CD4-positive, alpha-beta memory T cell (primary cell): ENCODE measurements at regions of chr12 and their contacts with region 1.

Region 1: GRCh38 chr12:53180220-53180930 is at the starts of genes CSAD and ZNF740:
- DNase-seq: peak; percentile 96 to 99 (median 97)
- H3K4me3 ChIP-seq: peak within 1 kb of the TSS; percentile 56 to 74
- H3K4me3 Mint-ChIP-seq: peak within 1 kb of the TSS; percentile 90 to 96 (median 91)
- H3K27ac ChIP-seq: peak within 1 kb of the TSS; percentile 89
- H3K27ac Mint-ChIP-seq: peak within 1 kb of the TSS; percentile 88 to 98 (median 97)
- H3K4me1 ChIP-seq: peaks cover 50% of the 10 kb centered on the region
- H3K4me1 Mint-ChIP-seq: peaks cover 36 to 62% (median 49%) of the 10 kb centered on the region in 4 donors
- H3K27me3 ChIP-seq: no peaks in the 10 kb centered on the region
- H3K27me3 Mint-ChIP-seq: no peaks in the 10 kb centered on the region
- total RNA-seq, gene CSAD: 62.5 to 64.2 TPM
- total RNA-seq, gene ZNF740: 109 to 113 TPM

Region 2: GRCh38 chr12:53054112-53054833 is 126.1 kb before region 1 on chr12:
- CTCF ChIA-PET with region 1: no interaction called
- POLR2A ChIA-PET with region 1: no interaction called
- intact Hi-C with region 1: loop called (anchors 1 kb)
- DNase-seq: peak; percentile 94 to 96 (median 94)
- H3K4me3 ChIP-seq: peak overlapping the region; percentile 76 to 87
- H3K4me3 Mint-ChIP-seq: peak overlapping the region; percentile 88 to 95 (median 92)
- H3K27ac ChIP-seq: peak overlapping the region; percentile 62
- H3K27ac Mint-ChIP-seq: peak overlapping the region; percentile 80 to 98 (median 93)
- H3K4me1 ChIP-seq: peaks cover 9% of the 10 kb centered on the region
- H3K4me1 Mint-ChIP-seq: peaks cover 4 to 18% (median 12%) of the 10 kb centered on the region in 4 donors
- H3K27me3 ChIP-seq: no peaks in the 10 kb centered on the region
- H3K27me3 Mint-ChIP-seq: no peaks in the 10 kb centered on the region

Region 3: DNA sequence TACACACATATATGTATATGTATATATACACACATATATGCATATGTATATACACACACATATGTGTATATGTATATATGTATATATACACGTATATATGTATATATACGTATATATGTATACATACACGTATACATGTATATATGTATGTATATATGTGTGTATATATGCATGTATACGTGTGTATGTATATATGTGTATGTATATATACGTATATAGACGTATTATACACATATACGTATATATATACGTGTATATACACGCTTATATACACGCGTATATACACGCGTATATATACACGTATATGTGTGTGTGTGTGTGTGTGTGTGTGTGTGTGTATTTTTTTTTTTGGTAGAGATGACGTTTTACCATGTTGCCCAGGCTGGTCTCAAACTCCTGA is 32.7 kb before region 1 on chr12:
- CTCF ChIA-PET with region 1: no interaction called
- POLR2A ChIA-PET with region 1: no interaction called
- intact Hi-C with region 1: no loop called
- DNase-seq: no peak
- H3K4me3 ChIP-seq: no peak overlapping the region
- H3K4me3 Mint-ChIP-seq: no peak overlapping the region
- H3K27ac ChIP-seq: no peak overlapping the region
- H3K27ac Mint-ChIP-seq: no peak overlapping the region
- H3K4me1 ChIP-seq: no peaks in the 10 kb centered on the region
- H3K4me1 Mint-ChIP-seq: peaks cover 0 to 1% (median 0%) of the 10 kb centered on the region in 4 donors
- H3K27me3 ChIP-seq: no peaks in the 10 kb centered on the region
- H3K27me3 Mint-ChIP-seq: no peaks in the 10 kb centered on the region

Region 4: DNA sequence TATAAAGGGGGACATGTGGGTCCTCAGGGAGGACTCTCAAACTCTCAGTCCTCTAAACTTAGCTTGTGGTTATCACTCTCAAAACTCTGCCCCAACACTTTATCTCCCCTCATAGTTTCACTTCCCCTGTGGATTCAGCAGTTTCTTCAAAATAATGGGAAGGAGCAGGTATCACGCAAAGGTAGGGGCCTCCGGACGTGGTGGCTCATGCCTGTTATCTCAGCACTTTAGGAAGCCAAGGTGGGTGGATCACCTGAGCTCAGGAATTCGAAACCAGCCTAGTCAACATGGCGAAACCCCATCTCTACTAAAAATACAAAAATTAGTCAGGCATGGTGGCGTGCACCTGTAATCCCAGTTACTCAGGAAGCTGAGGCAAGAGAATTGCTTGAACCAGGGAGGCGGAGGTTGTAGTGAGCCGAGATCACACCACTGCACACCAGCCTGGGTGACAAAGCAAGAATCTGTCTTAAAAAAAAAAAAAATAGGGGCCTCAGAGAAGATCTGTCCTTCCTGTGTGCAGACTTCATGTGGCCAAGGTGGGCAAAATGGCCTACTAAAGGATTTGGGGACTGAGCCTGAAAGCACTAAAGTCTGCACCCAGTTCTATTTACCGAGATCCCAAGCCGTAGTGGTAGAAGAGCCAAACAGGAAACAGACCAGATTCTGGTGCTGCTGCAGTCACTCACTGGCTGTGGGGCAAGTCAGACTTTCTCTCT is 20.2 kb after region 1 on chr12:
- CTCF ChIA-PET with region 1: interaction called, 16 read pairs
- POLR2A ChIA-PET with region 1: interaction called, 463 read pairs
- intact Hi-C with region 1: loop called (anchors 2 kb)
- DNase-seq: no peak
- H3K4me3 ChIP-seq: peak overlapping the region; percentile 12 to 29
- H3K4me3 Mint-ChIP-seq: peak overlapping the region; percentile 66 to 89 (median 73)
- H3K27ac ChIP-seq: peak overlapping the region; percentile 41
- H3K27ac Mint-ChIP-seq: peak overlapping the region; percentile 73 to 95 (median 86)
- H3K4me1 ChIP-seq: peaks cover 95% of the 10 kb centered on the region
- H3K4me1 Mint-ChIP-seq: peaks cover 48 to 84% (median 66%) of the 10 kb centered on the region in 4 donors
- H3K27me3 ChIP-seq: no peaks in the 10 kb centered on the region
- H3K27me3 Mint-ChIP-seq: no peaks in the 10 kb centered on the region

Region 5: GRCh38 chr12:53220801-53221202 is 40.4 kb after region 1 on chr12:
- CTCF ChIA-PET with region 1: interaction called, 3 read pairs
- POLR2A ChIA-PET with region 1: interaction called, 463 read pairs
- intact Hi-C with region 1: loop called (anchors 1 kb)
- DNase-seq: peak; percentile 60 to 85 (median 65)
- H3K4me3 ChIP-seq: peak overlapping the region; percentile 73 to 82
- H3K4me3 Mint-ChIP-seq: peak overlapping the region; percentile 95 to 99 (median 98)
- H3K27ac ChIP-seq: peak overlapping the region; percentile 98
- H3K27ac Mint-ChIP-seq: peak overlapping the region; percentile 93 to 99 (median 97)
- H3K4me1 ChIP-seq: peaks cover 78% of the 10 kb centered on the region
- H3K4me1 Mint-ChIP-seq: peaks cover 63 to 93% (median 72%) of the 10 kb centered on the region in 4 donors
- H3K27me3 ChIP-seq: no peaks in the 10 kb centered on the region
- H3K27me3 Mint-ChIP-seq: no peaks in the 10 kb centered on the region

Region 6: GRCh38 chr12:53267999-53268647 is 87.7 kb after region 1 on chr12 and contains the start of gene ESPL1:
- CTCF ChIA-PET with region 1: interaction called, 8 read pairs
- POLR2A ChIA-PET with region 1: interaction called, 9 read pairs
- intact Hi-C with region 1: loop called (anchors 1 kb)
- DNase-seq: peak; percentile 78 to 82 (median 81)
- H3K4me3 ChIP-seq: peak within 1 kb of the TSS; percentile 76 to 91
- H3K4me3 Mint-ChIP-seq: peak within 1 kb of the TSS; percentile 93 to 100 (median 96)
- H3K27ac ChIP-seq: peak within 1 kb of the TSS; percentile 71
- H3K27ac Mint-ChIP-seq: peak within 1 kb of the TSS; percentile 92 to 97 (median 95)
- H3K4me1 ChIP-seq: peaks cover 10% of the 10 kb centered on the region
- H3K4me1 Mint-ChIP-seq: peaks cover 11 to 29% (median 19%) of the 10 kb centered on the region in 4 donors
- H3K27me3 ChIP-seq: no peaks in the 10 kb centered on the region
- H3K27me3 Mint-ChIP-seq: no peaks in the 10 kb centered on the region
- total RNA-seq, gene ESPL1: 0.20 to 0.55 TPM

Region 7: GRCh38 chr12:53295070-53295890 is 114.9 kb after region 1 on chr12 and contains the start of gene PFDN5:
- CTCF ChIA-PET with region 1: interaction called, 8 read pairs
- POLR2A ChIA-PET with region 1: interaction called, 30 read pairs
- intact Hi-C with region 1: loop called (anchors 1 kb)
- DNase-seq: peak; percentile 87 to 93 (median 91)
- H3K4me3 ChIP-seq: peak within 1 kb of the TSS; percentile 63 to 94
- H3K4me3 Mint-ChIP-seq: peak within 1 kb of the TSS; percentile 98 to 100 (median 99)
- H3K27ac ChIP-seq: peak within 1 kb of the TSS; percentile 81
- H3K27ac Mint-ChIP-seq: peak within 1 kb of the TSS; percentile 97 to 100 (median 99)
- H3K4me1 ChIP-seq: peaks cover 49% of the 10 kb centered on the region
- H3K4me1 Mint-ChIP-seq: peaks cover 23 to 59% (median 44%) of the 10 kb centered on the region in 4 donors
- H3K27me3 ChIP-seq: no peaks in the 10 kb centered on the region
- H3K27me3 Mint-ChIP-seq: no peaks in the 10 kb centered on the region
- total RNA-seq, gene PFDN5: 717 to 718 TPM

Region 8: DNA sequence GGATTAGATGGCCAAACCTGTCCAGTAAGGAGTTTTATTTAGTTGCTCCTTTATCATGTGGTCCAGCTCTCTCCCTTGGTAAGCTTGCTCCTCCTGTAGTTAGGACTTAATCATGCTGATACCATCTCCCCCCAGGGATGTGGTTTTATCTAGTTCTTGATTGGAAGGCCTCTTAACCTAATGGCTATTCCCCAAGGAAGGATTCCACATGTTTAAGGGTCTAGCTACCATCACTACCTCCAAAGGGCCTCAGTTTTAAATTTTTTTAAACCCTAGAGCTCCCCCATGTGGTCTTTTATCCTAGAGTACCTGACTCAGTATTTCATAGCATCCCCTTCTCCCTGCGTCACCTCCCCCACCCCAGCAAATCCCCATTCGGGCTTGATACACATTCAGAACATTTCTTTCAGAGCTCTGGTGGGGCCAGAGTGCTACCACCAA is 296.4 kb after region 1 on chr12:
- CTCF ChIA-PET with region 1: no interaction called
- POLR2A ChIA-PET with region 1: no interaction called
- intact Hi-C with region 1: no loop called
- DNase-seq: peak in 1 of 5 donors; percentile 15
- H3K4me3 ChIP-seq: no peak overlapping the region
- H3K4me3 Mint-ChIP-seq: no peak overlapping the region
- H3K27ac ChIP-seq: no peak overlapping the region
- H3K27ac Mint-ChIP-seq: peak overlapping the region in 6 of 7 donors; percentile 2 to 82 (median 32)
- H3K4me1 ChIP-seq: peaks cover 50% of the 10 kb centered on the region
- H3K4me1 Mint-ChIP-seq: peaks cover 31 to 50% (median 33%) of the 10 kb centered on the region in 4 donors
- H3K27me3 ChIP-seq: no peaks in the 10 kb centered on the region
- H3K27me3 Mint-ChIP-seq: no peaks in the 10 kb centered on the region

Region 9: DNA sequence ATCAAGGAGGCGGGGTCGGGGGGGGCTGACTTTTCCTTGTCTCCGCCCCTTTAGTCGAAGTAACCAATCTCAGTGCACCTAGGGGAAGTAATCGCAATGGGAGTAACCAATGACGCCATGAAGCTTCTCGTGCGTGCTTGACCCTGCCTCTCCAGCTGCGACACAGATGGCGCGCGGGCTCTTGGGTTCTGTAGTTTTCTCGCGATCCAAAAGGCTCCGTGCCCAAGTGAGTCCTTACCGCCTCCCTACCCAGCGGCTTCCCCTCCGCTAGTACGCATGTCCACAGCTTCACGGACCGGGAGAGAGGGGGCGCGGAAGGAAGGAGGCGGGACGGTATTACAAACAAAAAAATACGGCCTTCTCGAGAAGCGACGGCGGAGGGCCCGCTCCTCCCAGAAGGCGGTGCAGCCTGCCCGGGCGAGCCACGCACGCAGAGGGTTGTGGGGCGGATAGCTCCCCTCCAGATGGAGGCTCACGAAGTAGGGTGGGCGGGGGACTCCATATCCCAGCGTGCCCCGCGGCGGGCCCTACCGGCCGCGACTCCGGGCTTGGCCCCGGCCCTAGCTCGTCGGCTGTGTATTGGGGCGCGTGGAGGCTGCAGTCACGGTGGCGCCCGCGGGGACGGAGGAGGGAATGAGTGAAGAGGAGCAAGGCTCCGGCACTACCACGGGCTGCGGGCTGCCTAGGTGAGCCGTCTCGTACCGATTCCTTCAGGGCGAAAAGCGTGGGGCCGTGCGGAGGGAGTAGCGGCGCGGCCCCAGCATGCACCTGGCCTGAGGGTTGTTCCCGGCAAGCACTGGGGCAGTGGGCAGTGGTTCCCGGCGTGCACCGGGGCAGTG is 320.6 kb after region 1 on chr12 and contains the start of gene TARBP2:
- CTCF ChIA-PET with region 1: no interaction called
- POLR2A ChIA-PET with region 1: interaction called, 25 read pairs
- intact Hi-C with region 1: loop called (anchors 2 kb)
- DNase-seq: peak; percentile 98 to 99 (median 99)
- H3K4me3 ChIP-seq: peak within 1 kb of the TSS; percentile 79 to 91
- H3K4me3 Mint-ChIP-seq: peak within 1 kb of the TSS; percentile 89 to 98 (median 92)
- H3K27ac ChIP-seq: peak within 1 kb of the TSS; percentile 98
- H3K27ac Mint-ChIP-seq: peak within 1 kb of the TSS; percentile 92 to 100 (median 99)
- H3K4me1 ChIP-seq: peaks cover 41% of the 10 kb centered on the region
- H3K4me1 Mint-ChIP-seq: peaks cover 17 to 63% (median 45%) of the 10 kb centered on the region in 4 donors
- H3K27me3 ChIP-seq: no peaks in the 10 kb centered on the region
- H3K27me3 Mint-ChIP-seq: no peaks in the 10 kb centered on the region
- total RNA-seq, gene TARBP2: 26.9 to 37.0 TPM

Region 10: DNA sequence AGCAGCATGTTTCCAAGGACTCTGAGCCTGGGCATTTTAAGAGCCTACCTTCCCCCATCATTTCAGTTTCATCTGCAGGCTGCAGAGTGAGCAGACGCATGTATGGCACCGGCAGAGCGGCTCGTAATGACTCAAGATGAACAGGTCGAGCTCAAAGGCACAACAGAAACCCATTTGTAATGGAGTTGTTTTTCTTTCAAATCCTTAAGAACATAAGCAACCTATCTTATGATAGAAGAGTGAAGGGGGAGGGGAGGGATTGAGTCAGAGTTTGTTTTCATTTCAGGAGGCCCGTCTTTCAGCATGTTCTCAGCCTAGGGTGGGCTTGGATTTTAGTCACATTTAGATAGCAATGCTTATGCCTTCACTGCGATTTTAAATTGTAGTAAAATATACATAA is 626.3 kb after region 1 on chr12:
- CTCF ChIA-PET with region 1: no interaction called
- POLR2A ChIA-PET with region 1: no interaction called
- intact Hi-C with region 1: no loop called
- DNase-seq: no peak
- H3K4me3 ChIP-seq: no peak overlapping the region
- H3K4me3 Mint-ChIP-seq: no peak overlapping the region
- H3K27ac ChIP-seq: no peak overlapping the region
- H3K27ac Mint-ChIP-seq: no peak overlapping the region
- H3K4me1 ChIP-seq: no peaks in the 10 kb centered on the region
- H3K4me1 Mint-ChIP-seq: no peaks in the 10 kb centered on the region
- H3K27me3 ChIP-seq: peaks cover 5% of the 10 kb centered on the region
- H3K27me3 Mint-ChIP-seq: peaks cover 23 to 28% of the 10 kb centered on the region in 2 donors

Region 11: DNA sequence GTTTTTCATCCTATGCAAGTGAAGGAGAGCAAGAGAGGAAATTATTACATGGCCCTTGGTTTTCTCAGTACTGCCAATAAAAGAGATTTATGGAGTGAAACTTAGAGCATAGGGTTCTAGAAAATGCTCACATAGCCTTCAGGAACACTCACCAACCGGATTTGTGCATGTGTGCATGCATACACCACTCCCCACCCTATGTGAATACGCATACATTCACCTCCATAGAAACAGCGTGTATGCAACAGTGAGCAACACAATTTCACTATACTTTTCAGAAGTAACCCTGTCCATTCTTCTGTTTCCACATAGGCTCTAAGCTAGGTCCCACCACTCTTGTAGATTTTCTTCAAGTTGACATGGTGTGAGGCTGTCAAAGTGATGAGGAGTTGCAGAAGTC is 726.7 kb after region 1 on chr12:
- CTCF ChIA-PET with region 1: no interaction called
- POLR2A ChIA-PET with region 1: no interaction called
- intact Hi-C with region 1: no loop called
- DNase-seq: no peak
- H3K4me3 ChIP-seq: no peak overlapping the region
- H3K4me3 Mint-ChIP-seq: no peak overlapping the region
- H3K27ac ChIP-seq: no peak overlapping the region
- H3K27ac Mint-ChIP-seq: no peak overlapping the region
- H3K4me1 ChIP-seq: no peaks in the 10 kb centered on the region
- H3K4me1 Mint-ChIP-seq: no peaks in the 10 kb centered on the region
- H3K27me3 ChIP-seq: no peaks in the 10 kb centered on the region
- H3K27me3 Mint-ChIP-seq: peaks cover 12 to 25% of the 10 kb centered on the region in 2 donors